Left ventricle myocardium inferior (tissue), 1 donor: ENCODE measurements at regions of chr15 and their contacts with region 1.

Region 1: DNA sequence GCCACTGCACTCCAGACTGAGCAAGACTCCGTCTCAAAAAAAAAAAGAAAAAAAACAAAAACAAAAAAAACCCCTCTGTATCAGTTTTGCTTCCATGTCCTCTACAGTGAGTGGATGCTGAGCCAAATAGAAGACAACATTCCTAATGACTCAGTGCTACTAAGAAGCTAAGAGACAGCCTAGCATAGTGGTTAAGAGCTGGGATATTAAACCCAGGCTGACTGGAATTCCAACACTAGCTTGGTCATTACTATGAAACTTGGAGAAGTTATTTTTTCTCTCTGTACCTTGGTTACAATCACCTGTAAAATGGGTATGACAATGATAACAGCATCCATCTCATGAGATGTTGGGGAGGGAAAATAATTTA is 60.9 kb upstream of the PYGO1 start:
- DNase-seq: no peak
- H3K4me3 ChIP-seq: no peak overlapping the region
- H3K27ac ChIP-seq: no peak overlapping the region
- H3K4me1 ChIP-seq: no peaks in the 10 kb centered on the region
- H3K27me3 ChIP-seq: no peaks in the 10 kb centered on the region
- CTCF ChIP-seq: no peak

Region 2: DNA sequence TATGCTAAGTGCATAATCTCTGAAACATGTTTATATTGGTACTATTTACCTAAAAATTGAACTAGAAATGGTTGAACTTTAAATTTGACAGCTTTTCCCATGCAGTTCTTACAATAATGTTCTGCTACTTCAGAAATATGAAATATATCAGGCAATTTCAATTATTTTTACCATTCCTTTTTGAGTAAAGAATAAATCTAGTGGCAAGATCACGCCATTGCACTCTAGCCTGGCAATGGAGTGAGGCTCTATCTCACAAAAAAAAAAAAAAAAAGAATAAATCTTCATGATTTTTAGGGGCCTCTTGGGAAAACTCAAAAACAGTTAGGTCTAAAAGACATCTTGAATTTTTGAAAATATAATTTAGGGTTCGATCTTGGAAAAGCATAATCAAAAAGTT is 130.4 kb before region 1 on chr15:
- intact Hi-C with region 1: loop called (anchors 5 kb)
- DNase-seq: no peak
- H3K4me3 ChIP-seq: no peak overlapping the region
- H3K27ac ChIP-seq: no peak overlapping the region
- H3K4me1 ChIP-seq: no peaks in the 10 kb centered on the region
- H3K27me3 ChIP-seq: no peaks in the 10 kb centered on the region
- CTCF ChIP-seq: no peak

Region 3: DNA sequence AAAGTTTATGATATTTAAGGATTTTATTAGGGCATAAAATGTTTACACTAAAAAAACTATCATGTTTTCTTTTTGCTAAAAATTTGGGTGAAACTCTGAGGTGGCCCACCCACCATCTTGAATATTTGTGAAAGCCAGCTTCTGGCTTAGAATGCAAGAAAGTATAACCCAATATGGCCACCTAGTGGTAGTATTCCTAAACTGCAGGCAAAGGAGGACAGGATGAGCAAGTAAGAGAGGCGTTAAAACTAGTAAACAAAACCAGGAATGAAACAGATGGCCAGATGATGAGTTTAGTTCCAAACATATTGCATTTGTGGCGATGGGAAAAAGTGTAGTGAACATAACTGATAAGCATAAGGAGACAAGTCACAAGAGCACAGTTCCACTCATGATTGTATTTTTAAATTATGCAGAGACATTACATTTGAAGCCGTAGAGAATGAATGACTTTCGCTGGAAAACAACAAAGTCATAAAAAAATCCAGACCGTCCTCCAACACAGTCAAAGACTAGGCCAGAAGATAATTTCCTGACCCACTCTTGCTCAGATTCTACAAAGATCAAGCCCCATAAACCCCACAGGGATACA is 197.2 kb after region 1 on chr15:
- intact Hi-C with region 1: loop called (anchors 2 kb)
- DNase-seq: no peak
- H3K4me3 ChIP-seq: no peak overlapping the region
- H3K27ac ChIP-seq: no peak overlapping the region
- H3K4me1 ChIP-seq: no peaks in the 10 kb centered on the region
- H3K27me3 ChIP-seq: no peaks in the 10 kb centered on the region
- CTCF ChIP-seq: peak; percentile 88